Naive thymus-derived CD4-positive, alpha-beta T cell (primary cell): ENCODE measurements at regions of chr10 and their contacts with region 1.

Region 1: DNA sequence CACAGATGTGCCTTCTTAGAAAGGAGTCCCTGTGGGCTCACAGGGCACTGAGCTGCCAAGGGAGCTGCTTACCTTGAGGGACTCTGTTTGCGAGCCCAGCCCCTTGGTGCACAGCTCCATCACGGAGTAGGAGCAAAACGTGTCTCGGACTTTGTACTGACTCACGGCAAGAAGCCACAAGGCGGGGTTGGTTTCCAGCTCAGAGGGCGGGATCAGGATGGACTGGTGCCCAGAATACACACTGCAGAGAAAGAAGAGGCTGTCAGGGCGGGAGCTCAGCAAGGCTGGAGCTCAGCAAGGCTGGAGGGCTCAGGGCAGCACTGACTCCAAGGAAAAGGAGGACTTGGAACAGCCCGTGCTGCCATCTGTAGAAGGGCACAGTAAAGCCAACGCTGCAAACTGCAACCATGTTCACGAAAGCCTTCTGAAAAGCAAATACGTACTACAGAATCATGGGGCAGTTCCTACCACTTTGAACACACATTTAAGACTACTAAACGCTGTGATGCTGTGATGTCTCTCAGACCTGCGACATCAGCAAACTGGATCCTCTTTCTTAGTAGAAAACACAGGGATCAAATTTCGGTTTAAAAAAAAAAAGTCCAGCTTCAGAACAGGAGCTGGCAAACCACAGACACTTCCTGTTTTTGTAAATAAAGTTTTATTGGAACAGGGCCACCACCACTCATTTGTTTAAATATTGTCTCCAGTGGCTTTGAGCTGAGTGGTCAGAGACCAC is 194.3 kb downstream of the ZMYND11 start:
- DNase-seq: peak in 3 of 9 donors; percentile 10 to 15 (median 13)
- ATAC-seq: peak; percentile 31
- H3K4me3 ChIP-seq: no peak overlapping the region
- H3K4me3 Mint-ChIP-seq: peak overlapping the region; percentile 54 to 85 (median 70)
- H3K27ac ChIP-seq: peak overlapping the region; percentile 16
- H3K27ac Mint-ChIP-seq: peak overlapping the region; percentile 8 to 95 (median 79)
- H3K4me1 ChIP-seq: peaks cover 20 to 25% of the 10 kb centered on the region in 2 donors
- H3K4me1 Mint-ChIP-seq: peaks cover 21 to 53% (median 31%) of the 10 kb centered on the region in 7 donors
- H3K27me3 ChIP-seq: no peaks in the 10 kb centered on the region
- H3K27me3 Mint-ChIP-seq: no peaks in the 10 kb centered on the region

Region 2: DNA sequence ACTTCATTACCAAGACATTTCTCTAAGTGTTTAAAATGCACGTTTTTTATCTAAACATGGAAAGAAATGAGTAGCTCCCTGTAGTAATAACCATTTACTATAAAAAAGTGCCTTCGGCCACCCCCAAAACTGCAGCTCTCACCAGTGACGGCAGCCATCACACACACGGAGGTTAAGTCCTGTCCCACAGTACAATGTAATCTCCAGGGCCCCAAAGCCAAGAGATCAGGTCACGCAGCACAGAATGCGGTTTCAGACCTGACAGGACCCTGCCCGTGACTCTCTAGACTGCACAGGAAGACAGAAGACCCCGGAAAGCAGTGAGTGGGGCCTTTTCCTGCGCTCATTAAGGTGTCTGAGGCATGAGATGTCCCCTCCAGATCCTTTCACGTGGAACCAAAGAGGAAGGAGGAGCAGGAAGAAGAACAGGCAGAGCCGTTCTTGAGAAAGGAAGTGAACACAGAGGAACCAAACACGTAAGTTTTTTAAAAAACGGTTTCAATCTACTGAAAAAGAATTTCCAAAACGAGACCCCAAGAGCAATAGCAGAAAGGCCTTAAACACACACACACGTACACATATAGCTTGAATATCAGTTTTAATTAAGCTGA is 68.6 kb before region 1 on chr10:
- CTCF ChIA-PET with region 1: no interaction called
- POLR2A ChIA-PET with region 1: no interaction called
- intact Hi-C with region 1: no loop called
- DNase-seq: no peak
- ATAC-seq: no peak
- H3K4me3 ChIP-seq: no peak overlapping the region
- H3K4me3 Mint-ChIP-seq: no peak overlapping the region
- H3K27ac ChIP-seq: no peak overlapping the region
- H3K27ac Mint-ChIP-seq: peak overlapping the region in 1 of 9 donors; percentile 43
- H3K4me1 ChIP-seq: no peaks in the 10 kb centered on the region
- H3K4me1 Mint-ChIP-seq: peaks cover 0 to 5% (median 1%) of the 10 kb centered on the region in 7 donors
- H3K27me3 ChIP-seq: no peaks in the 10 kb centered on the region
- H3K27me3 Mint-ChIP-seq: no peaks in the 10 kb centered on the region

Region 3: GRCh38 chr10:287814-288213 is 41.7 kb before region 1 on chr10:
- CTCF ChIA-PET with region 1: no interaction called
- POLR2A ChIA-PET with region 1: no interaction called
- intact Hi-C with region 1: no loop called
- DNase-seq: no peak
- ATAC-seq: no peak
- H3K4me3 ChIP-seq: no peak overlapping the region
- H3K4me3 Mint-ChIP-seq: no peak overlapping the region
- H3K27ac ChIP-seq: no peak overlapping the region
- H3K27ac Mint-ChIP-seq: no peak overlapping the region
- H3K4me1 ChIP-seq: no peaks in the 10 kb centered on the region
- H3K4me1 Mint-ChIP-seq: peaks cover 0 to 13% (median 0%) of the 10 kb centered on the region in 7 donors
- H3K27me3 ChIP-seq: no peaks in the 10 kb centered on the region
- H3K27me3 Mint-ChIP-seq: peaks cover 0 to 5% (median 0%) of the 10 kb centered on the region in 5 donors

Region 4: DNA sequence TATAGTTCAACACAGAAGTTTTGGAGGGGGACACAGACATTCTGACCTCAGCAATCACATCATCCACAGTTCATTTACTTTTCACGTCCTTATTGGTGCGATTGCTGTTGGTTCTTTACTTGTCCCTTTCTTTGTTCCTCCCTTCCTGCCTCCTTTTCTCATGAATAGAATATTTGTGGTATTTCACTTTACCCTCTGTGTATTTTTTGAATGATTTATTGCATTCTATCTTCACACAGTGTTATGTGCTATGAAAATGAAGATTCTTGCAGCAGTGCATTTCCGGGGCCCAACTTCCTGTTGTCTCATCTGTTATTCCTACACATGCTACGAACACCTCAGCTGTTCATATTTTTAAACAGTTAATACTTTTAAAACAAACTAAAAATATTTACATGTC is 14.7 kb before region 1 on chr10:
- CTCF ChIA-PET with region 1: interaction called, 3 read pairs
- POLR2A ChIA-PET with region 1: interaction called, 3 read pairs
- intact Hi-C with region 1: loop called in 1 of 2 experiments (anchors 2 kb)
- DNase-seq: no peak
- ATAC-seq: no peak
- H3K4me3 ChIP-seq: no peak overlapping the region
- H3K4me3 Mint-ChIP-seq: peak overlapping the region in 3 of 10 donors; percentile 5 to 48 (median 9)
- H3K27ac ChIP-seq: no peak overlapping the region
- H3K27ac Mint-ChIP-seq: peak overlapping the region in 5 of 9 donors; percentile 0 to 81 (median 58)
- H3K4me1 ChIP-seq: peaks cover 0 to 16% of the 10 kb centered on the region in 2 donors
- H3K4me1 Mint-ChIP-seq: peaks cover 2 to 21% (median 13%) of the 10 kb centered on the region in 7 donors
- H3K27me3 ChIP-seq: no peaks in the 10 kb centered on the region
- H3K27me3 Mint-ChIP-seq: peaks cover 0 to 4% (median 0%) of the 10 kb centered on the region in 5 donors

Region 5: DNA sequence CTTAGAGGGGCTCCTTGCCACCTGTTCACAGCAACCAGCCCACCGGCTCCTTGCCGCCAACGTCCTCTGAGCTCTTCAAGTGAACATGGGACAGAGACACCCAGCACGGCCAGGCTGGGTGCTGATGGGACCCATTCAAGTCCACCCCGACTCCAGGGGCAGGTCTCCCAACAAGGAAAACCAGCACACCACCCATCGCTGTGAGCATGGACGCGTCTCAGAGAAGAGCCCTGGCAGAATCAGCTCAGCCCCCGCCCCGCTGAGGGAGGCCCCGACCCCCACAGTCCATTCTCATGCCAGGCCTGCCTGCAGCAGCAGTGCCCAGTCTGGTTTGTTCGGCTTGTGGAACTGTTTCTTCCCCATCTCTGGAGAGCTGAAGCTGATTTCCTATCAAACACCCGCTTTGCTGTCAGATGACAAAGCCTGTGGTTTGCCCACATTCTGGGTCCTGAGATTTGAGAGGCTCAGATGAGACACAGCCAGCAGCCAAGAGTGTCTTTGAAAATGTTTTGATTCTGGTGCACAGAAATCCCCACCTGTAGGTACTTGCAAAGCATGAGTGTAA is 22.3 kb after region 1 on chr10:
- CTCF ChIA-PET with region 1: interaction called, 6 read pairs
- POLR2A ChIA-PET with region 1: no interaction called
- intact Hi-C with region 1: loop called in 1 of 2 experiments (anchors 2 kb)
- DNase-seq: peak in 7 of 9 donors; percentile 31 to 68 (median 53)
- ATAC-seq: peak; percentile 81
- H3K4me3 ChIP-seq: no peak overlapping the region
- H3K4me3 Mint-ChIP-seq: peak overlapping the region in 8 of 10 donors; percentile 19 to 60 (median 46)
- H3K27ac ChIP-seq: no peak overlapping the region
- H3K27ac Mint-ChIP-seq: peak overlapping the region in 8 of 9 donors; percentile 50 to 87 (median 70)
- H3K4me1 ChIP-seq: peaks cover 6 to 15% of the 10 kb centered on the region in 2 donors
- H3K4me1 Mint-ChIP-seq: peaks cover 0 to 25% (median 21%) of the 10 kb centered on the region in 7 donors
- H3K27me3 ChIP-seq: no peaks in the 10 kb centered on the region
- H3K27me3 Mint-ChIP-seq: no peaks in the 10 kb centered on the region

Region 6: DNA sequence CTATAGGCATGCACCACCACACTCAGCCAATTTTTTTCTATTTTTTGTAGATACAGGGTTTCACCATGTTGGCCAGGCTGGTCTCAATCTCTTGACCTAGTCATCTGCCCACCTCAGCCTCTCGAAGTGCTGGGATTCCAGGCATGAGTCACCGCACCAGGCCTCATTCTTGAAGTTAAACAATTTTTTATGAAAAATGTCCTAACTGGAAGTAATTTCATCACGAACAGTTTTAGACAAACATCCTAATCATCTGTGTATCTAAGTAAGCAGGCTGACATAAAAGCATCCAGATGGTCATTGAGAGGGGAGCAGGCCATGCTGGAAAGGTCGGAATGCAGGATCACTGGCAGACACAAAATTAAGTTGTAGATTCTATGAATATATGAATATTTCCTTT is 74.8 kb after region 1 on chr10:
- CTCF ChIA-PET with region 1: no interaction called
- POLR2A ChIA-PET with region 1: no interaction called
- intact Hi-C with region 1: no loop called
- DNase-seq: no peak
- ATAC-seq: no peak
- H3K4me3 ChIP-seq: no peak overlapping the region
- H3K4me3 Mint-ChIP-seq: no peak overlapping the region
- H3K27ac ChIP-seq: no peak overlapping the region
- H3K27ac Mint-ChIP-seq: peak overlapping the region in 2 of 9 donors; percentile 6
- H3K4me1 ChIP-seq: no peaks in the 10 kb centered on the region
- H3K4me1 Mint-ChIP-seq: peaks cover 0 to 5% (median 0%) of the 10 kb centered on the region in 7 donors
- H3K27me3 ChIP-seq: no peaks in the 10 kb centered on the region
- H3K27me3 Mint-ChIP-seq: peaks cover 0 to 3% (median 0%) of the 10 kb centered on the region in 5 donors